Ascending aorta (tissue), 2 donors: ENCODE measurements at regions of chr5 and their contacts with region 1.

Region 1: GRCh38 chr5:131417240-131417869 is 153.5 kb downstream of the CDC42SE2 start:
- DNase-seq: peak in 1 of 2 donors; percentile 79
- H3K4me3 ChIP-seq: no peak overlapping the region
- H3K27ac ChIP-seq: no peak overlapping the region
- H3K4me1 ChIP-seq: peaks cover 0 to 4% of the 10 kb centered on the region in 2 donors
- H3K27me3 ChIP-seq: no peaks in the 10 kb centered on the region
- CTCF ChIP-seq: peak; percentile 56 to 85 (median 81)

Region 2: GRCh38 chr5:131165119-131165727 is 252.1 kb before region 1 on chr5 and contains the start of gene HINT1:
- intact Hi-C with region 1: loop called (anchors 2 kb)
- DNase-seq: peak; percentile 53 to 94
- H3K4me3 ChIP-seq: peak within 1 kb of the TSS; percentile 82 to 83
- H3K27ac ChIP-seq: peak within 1 kb of the TSS; percentile 92 to 94
- H3K4me1 ChIP-seq: peaks cover 3 to 13% of the 10 kb centered on the region in 2 donors
- H3K27me3 ChIP-seq: no peaks in the 10 kb centered on the region
- CTCF ChIP-seq: no peak
- total RNA-seq, gene HINT1: 78.9 TPM

Region 3: DNA sequence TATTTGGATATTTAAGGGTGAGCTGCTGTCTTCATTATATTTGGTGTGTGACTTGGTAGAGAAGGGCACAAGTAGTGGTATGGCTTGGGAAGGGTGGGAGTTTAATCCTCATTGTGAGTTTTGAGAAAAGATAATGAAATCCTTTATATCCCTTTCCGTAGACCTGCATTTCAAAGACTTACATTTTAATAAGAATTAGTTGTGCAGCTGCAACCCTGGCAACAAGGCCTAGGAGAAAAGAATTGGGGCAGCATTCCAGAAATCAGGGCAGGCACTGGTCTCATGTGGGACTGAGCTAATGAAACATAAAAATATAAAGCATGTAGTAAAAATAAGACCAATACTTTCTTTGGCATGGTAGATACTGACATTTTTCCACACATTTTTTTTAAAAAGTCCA is 93.1 kb before region 1 on chr5:
- intact Hi-C with region 1: no loop called
- DNase-seq: no peak
- H3K4me3 ChIP-seq: no peak overlapping the region
- H3K27ac ChIP-seq: no peak overlapping the region
- H3K4me1 ChIP-seq: peaks cover 0 to 28% of the 10 kb centered on the region in 2 donors
- H3K27me3 ChIP-seq: no peaks in the 10 kb centered on the region
- CTCF ChIP-seq: no peak

Region 4: GRCh38 chr5:131968396-131968954 is 551.1 kb after region 1 on chr5:
- intact Hi-C with region 1: no loop called
- DNase-seq: no peak
- H3K4me3 ChIP-seq: no peak overlapping the region
- H3K27ac ChIP-seq: no peak overlapping the region
- H3K4me1 ChIP-seq: no peaks in the 10 kb centered on the region
- H3K27me3 ChIP-seq: no peaks in the 10 kb centered on the region
- CTCF ChIP-seq: no peak